ENCODE measurements at regions of chr13 and their contacts with region 1.

Region 1: DNA sequence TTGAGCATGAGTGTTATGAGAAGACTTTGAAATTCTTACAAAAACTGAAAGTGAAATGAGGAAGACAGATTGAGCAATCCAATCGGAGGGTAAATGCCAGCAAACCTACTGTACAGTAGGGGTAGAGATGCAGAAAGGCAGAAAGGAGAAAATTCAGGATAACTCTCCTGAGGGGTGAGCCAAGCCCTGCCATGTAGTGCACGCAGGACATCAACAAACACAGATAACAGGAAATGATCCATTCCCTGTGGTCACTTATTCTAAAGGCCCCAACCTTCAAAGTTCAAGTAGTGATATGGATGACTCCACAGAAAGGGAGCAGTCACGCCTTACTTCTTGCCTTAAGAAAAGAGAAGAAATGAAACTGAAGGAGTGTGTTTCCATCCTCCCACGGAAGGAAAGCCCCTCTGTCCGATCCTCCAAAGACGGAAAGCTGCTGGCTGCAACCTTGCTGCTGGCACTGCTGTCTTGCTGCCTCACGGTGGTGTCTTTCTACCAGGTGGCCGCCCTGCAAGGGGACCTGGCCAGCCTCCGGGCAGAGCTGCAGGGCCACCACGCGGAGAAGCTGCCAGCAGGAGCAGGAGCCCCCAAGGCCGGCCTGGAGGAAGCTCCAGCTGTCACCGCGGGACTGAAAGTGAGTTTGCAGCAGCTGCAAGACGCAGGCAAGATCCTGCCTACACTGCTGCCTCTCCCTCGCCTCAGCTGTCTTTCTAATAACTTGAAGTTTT is at the start of gene TNFSF13B:
- DNase-seq: peak; percentile 74
- ATAC-seq: peak; percentile 86
- H3K4me3 ChIP-seq: peak within 1 kb of the TSS; percentile 84
- H3K27ac ChIP-seq: peak within 1 kb of the TSS; percentile 81
- H3K4me1 ChIP-seq: peaks cover 14% of the 10 kb centered on the region
- H3K27me3 ChIP-seq: no peaks in the 10 kb centered on the region
- CTCF ChIP-seq: peak; percentile 31 to 58 (median 51); a peak in 4 of 6 replicates
- EP300 ChIP-seq: peak in 1 of 2 experiments; percentile 7; a peak in 1 of 4 replicates
- POLR2A ChIP-seq: peak; percentile 66
- RAD21 ChIP-seq: peak; percentile 50
- polyA plus RNA-seq, gene TNFSF13B: 12.5 to 32.0 TPM

Region 2: DNA sequence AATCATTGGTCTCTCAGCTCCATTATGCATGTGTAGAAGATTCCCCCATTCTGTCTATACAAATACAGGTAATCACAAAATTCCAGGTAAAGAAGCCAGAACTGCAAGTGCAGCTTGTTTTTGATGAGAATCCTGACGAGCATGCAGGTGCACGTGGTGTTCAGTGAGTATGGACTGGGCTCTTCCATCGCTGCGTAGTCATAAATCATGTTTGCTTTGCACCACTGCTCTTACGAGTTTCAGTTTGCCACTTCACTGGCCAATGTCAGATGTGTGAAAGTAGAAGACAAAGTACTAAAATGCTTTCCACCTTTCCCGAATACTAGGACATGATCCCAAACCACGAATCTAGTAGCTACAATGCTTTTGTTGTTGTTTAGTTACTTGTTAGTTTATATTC is 445.1 kb before region 1 on chr13:
- CTCF ChIA-PET with region 1: no interaction called
- POLR2A ChIA-PET with region 1: no interaction called
- RAD21 ChIA-PET with region 1: no interaction called
- SMC1A ChIA-PET with region 1: no interaction called
- in situ Hi-C with region 1: no loop called
- intact Hi-C with region 1: no loop called
- DNase-seq: no peak
- ATAC-seq: no peak
- H3K4me3 ChIP-seq: no peak overlapping the region
- H3K27ac ChIP-seq: no peak overlapping the region
- H3K4me1 ChIP-seq: no peaks in the 10 kb centered on the region
- H3K27me3 ChIP-seq: no peaks in the 10 kb centered on the region
- CTCF ChIP-seq: no peak
- EP300 ChIP-seq: no peak
- POLR2A ChIP-seq: no peak
- RAD21 ChIP-seq: no peak

Region 3: GRCh38 chr13:108218044-108218974 is 51.5 kb before region 1 on chr13 and contains the start of gene ABHD13:
- CTCF ChIA-PET with region 1: interaction called, 12 read pairs
- POLR2A ChIA-PET with region 1: no interaction called
- RAD21 ChIA-PET with region 1: interaction called, 4 read pairs
- SMC1A ChIA-PET with region 1: interaction called, 19 read pairs
- in situ Hi-C with region 1: no loop called
- intact Hi-C with region 1: loop called (anchors 2 kb)
- DNase-seq: peak; percentile 54
- ATAC-seq: peak; percentile 85
- H3K4me3 ChIP-seq: peak within 1 kb of the TSS; percentile 83
- H3K27ac ChIP-seq: peak within 1 kb of the TSS; percentile 87
- H3K4me1 ChIP-seq: peaks cover 19% of the 10 kb centered on the region
- H3K27me3 ChIP-seq: no peaks in the 10 kb centered on the region
- CTCF ChIP-seq: no peak
- EP300 ChIP-seq: peak in 1 of 2 experiments; percentile 26; a peak in 1 of 4 replicates
- POLR2A ChIP-seq: peak; percentile 88
- RAD21 ChIP-seq: no peak
- polyA plus RNA-seq, gene ABHD13: 3.2 to 3.9 TPM

Region 4: GRCh38 chr13:108227651-108228272 is 42.0 kb before region 1 on chr13:
- CTCF ChIA-PET with region 1: interaction called, 12 read pairs
- POLR2A ChIA-PET with region 1: no interaction called
- RAD21 ChIA-PET with region 1: interaction called, 5 read pairs
- SMC1A ChIA-PET with region 1: interaction called, 19 read pairs
- in situ Hi-C with region 1: no loop called
- intact Hi-C with region 1: loop called (anchors 2 kb)
- DNase-seq: no peak
- ATAC-seq: peak; percentile 18; the same call in 1 of the 3 replicates
- H3K4me3 ChIP-seq: no peak overlapping the region
- H3K27ac ChIP-seq: no peak overlapping the region
- H3K4me1 ChIP-seq: peaks cover 7% of the 10 kb centered on the region
- H3K27me3 ChIP-seq: no peaks in the 10 kb centered on the region
- CTCF ChIP-seq: peak; percentile 58 to 60 (median 58); a peak in 5 of 6 replicates
- EP300 ChIP-seq: no peak
- POLR2A ChIP-seq: no peak
- RAD21 ChIP-seq: peak; percentile 76

Region 5: GRCh38 chr13:108315273-108315672 is 45.5 kb after region 1 on chr13:
- CTCF ChIA-PET with region 1: no interaction called
- POLR2A ChIA-PET with region 1: no interaction called
- RAD21 ChIA-PET with region 1: interaction called, 4 read pairs
- SMC1A ChIA-PET with region 1: interaction called, 8 read pairs
- in situ Hi-C with region 1: no loop called
- intact Hi-C with region 1: loop called (anchors 2 kb)
- DNase-seq: peak; percentile 5
- ATAC-seq: peak; percentile 89
- H3K4me3 ChIP-seq: no peak overlapping the region
- H3K27ac ChIP-seq: no peak overlapping the region
- H3K4me1 ChIP-seq: no peaks in the 10 kb centered on the region
- H3K27me3 ChIP-seq: no peaks in the 10 kb centered on the region
- CTCF ChIP-seq: no peak
- EP300 ChIP-seq: no peak
- POLR2A ChIP-seq: no peak
- RAD21 ChIP-seq: no peak

Region 6: DNA sequence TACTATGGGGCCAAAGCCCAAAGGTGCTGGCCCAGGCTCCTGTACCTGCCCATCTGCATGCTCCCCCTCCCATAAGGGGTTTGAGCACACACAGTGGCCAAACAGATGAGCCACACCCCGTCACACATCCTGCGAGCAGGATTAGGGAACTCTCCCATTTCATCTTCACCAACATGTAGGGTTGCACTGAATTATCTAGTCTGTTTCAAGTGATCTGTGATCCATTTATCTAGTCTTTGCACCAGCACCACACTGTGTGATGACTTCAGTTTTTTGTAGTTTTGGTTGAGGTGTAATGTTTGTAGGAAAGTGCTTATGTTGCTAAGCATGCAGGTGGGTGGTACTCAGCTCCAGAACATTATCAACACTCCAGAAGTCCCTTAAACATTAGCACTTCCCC is 609.0 kb after region 1 on chr13:
- CTCF ChIA-PET with region 1: no interaction called
- POLR2A ChIA-PET with region 1: no interaction called
- RAD21 ChIA-PET with region 1: no interaction called
- SMC1A ChIA-PET with region 1: no interaction called
- in situ Hi-C with region 1: no loop called
- intact Hi-C with region 1: no loop called
- DNase-seq: no peak
- ATAC-seq: no peak; the same call in 2 of the 3 replicates
- H3K4me3 ChIP-seq: no peak overlapping the region
- H3K27ac ChIP-seq: no peak overlapping the region
- H3K4me1 ChIP-seq: no peaks in the 10 kb centered on the region
- H3K27me3 ChIP-seq: no peaks in the 10 kb centered on the region
- CTCF ChIP-seq: no peak
- EP300 ChIP-seq: no peak
- POLR2A ChIP-seq: no peak
- RAD21 ChIP-seq: no peak

Region 7: GRCh38 chr13:109586509-109587346 is 1317.0 kb after region 1 on chr13:
- CTCF ChIA-PET with region 1: no interaction called
- POLR2A ChIA-PET with region 1: no interaction called
- RAD21 ChIA-PET with region 1: no interaction called
- SMC1A ChIA-PET with region 1: no interaction called
- in situ Hi-C with region 1: no loop called
- intact Hi-C with region 1: no loop called
- DNase-seq: no peak
- ATAC-seq: no peak
- H3K4me3 ChIP-seq: no peak overlapping the region
- H3K27ac ChIP-seq: no peak overlapping the region
- H3K4me1 ChIP-seq: no peaks in the 10 kb centered on the region
- H3K27me3 ChIP-seq: no peaks in the 10 kb centered on the region
- CTCF ChIP-seq: no peak
- EP300 ChIP-seq: no peak
- POLR2A ChIP-seq: no peak
- RAD21 ChIP-seq: no peak